Transverse colon (tissue), 4 donors: ENCODE measurements at regions of chr22 and their contacts with region 1.

Region 1: GRCh38 chr22:33565580-33565995 is 354.7 kb downstream of the LARGE1 start:
- DNase-seq: no peak
- H3K4me3 ChIP-seq: no peak overlapping the region
- H3K27ac ChIP-seq: no peak overlapping the region
- H3K4me1 ChIP-seq: peaks cover 0 to 6% (median 0%) of the 10 kb centered on the region in 4 donors
- H3K27me3 ChIP-seq: no peaks in the 10 kb centered on the region
- CTCF ChIP-seq: no peak
- EP300 ChIP-seq: no peak
- POLR2A ChIP-seq: no peak

Region 2: GRCh38 chr22:33544707-33545106 is 20.9 kb before region 1 on chr22:
- in situ Hi-C with region 1: no loop called
- intact Hi-C with region 1: loop called (anchors 2 kb)
- DNase-seq: no peak
- H3K4me3 ChIP-seq: no peak overlapping the region
- H3K27ac ChIP-seq: no peak overlapping the region
- H3K4me1 ChIP-seq: peaks cover 6 to 21% (median 9%) of the 10 kb centered on the region in 4 donors
- H3K27me3 ChIP-seq: no peaks in the 10 kb centered on the region
- CTCF ChIP-seq: no peak
- EP300 ChIP-seq: no peak
- POLR2A ChIP-seq: no peak

Region 3: DNA sequence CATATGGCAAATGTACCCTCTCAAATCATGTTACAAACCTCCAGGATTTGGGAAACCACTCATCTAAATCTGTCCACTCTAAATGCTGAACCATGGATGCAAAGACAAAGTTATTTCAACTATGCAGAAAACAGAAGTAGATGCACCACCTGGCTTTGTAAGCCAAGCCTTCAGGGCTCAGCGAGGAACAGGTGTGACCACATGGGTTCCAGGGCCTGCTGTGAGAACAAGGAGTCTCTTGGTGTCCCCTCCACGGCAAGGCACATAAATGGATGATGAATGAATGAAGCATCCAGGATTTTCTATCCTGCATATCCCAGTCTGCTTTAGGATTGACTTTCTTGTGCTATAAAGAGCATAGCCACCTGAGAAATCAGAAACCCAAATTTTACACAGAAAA is 70.2 kb after region 1 on chr22:
- in situ Hi-C with region 1: no loop called
- intact Hi-C with region 1: no loop called
- DNase-seq: no peak
- H3K4me3 ChIP-seq: no peak overlapping the region
- H3K27ac ChIP-seq: no peak overlapping the region
- H3K4me1 ChIP-seq: no peaks in the 10 kb centered on the region
- H3K27me3 ChIP-seq: no peaks in the 10 kb centered on the region
- CTCF ChIP-seq: no peak
- EP300 ChIP-seq: no peak
- POLR2A ChIP-seq: no peak